ENCODE measurements at regions of chr14 and their contacts with region 1.

Region 1: GRCh38 chr14:103281496-103282231 is 52.4 kb upstream of the EIF5 start:
- ATAC-seq: peak; percentile 57 to 99 (median 62)
- H3K4me3 ChIP-seq: no peak overlapping the region
- H3K27ac ChIP-seq: no peak overlapping the region
- H3K4me1 ChIP-seq: peaks cover 0 to 3% of the 10 kb centered on the region in 2 donors

Region 2: DNA sequence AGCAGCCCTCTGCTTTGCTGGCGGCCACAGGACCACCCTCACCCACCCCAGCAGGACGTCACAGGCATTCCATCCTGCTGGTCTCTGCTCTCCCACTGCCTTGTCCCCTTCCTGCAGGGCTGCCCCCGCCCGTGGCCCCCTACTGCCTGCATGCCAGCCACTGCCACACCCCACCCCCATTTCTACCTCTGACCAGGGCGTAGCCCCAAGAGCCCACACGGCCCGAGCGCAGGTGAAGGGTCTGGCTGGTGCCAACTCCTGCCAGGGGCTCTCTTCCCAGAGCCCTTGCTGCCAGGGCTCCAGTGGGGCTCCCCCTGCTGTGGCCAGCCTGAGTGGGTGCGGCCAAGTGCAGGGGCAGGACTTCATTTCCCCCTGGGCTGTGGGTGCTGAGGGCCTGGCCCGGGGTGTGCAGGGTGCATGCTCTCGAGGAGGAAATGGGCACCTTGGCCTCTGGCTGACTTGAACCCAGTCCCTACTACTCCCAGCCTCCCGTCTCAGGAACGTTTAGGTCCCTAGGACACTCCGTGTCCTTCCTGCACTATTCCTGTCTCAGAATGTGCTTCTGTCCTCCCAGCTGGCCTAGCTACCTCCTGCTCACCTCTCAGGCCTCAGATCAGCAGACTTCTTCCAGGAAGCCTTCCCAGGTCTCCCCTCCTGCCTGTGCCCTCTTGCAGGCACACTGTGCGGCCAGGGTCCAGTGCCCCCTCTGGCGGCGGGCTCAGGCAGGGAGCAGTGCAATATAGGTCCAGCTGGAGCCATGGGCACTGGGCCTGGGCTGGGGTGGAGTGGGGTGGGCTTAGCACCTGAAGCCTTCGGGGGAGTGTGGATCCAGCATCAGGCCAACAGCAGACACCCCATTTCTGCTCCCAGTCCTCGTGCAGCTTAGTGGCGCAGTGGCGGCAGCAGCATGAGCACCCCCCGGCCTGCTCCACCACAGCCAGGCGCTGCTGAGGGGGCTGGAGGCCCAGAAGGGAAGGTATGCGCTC is 196.3 kb before region 1 on chr14:
- in situ Hi-C with region 1: loop called in 8 of 9 experiments (anchors 10 to 25 kb)
- ATAC-seq: peak in 2 of 8 experiments; percentile 46 to 66
- H3K4me3 ChIP-seq: no peak overlapping the region
- H3K27ac ChIP-seq: no peak overlapping the region
- H3K4me1 ChIP-seq: peaks cover 8% of the 10 kb centered on the region in 2 donors

Region 3: GRCh38 chr14:103361868-103362267 is 80.2 kb after region 1 on chr14:
- in situ Hi-C with region 1: no loop called
- ATAC-seq: peak in 5 of 8 experiments; percentile 73 to 100 (median 81)
- H3K4me3 ChIP-seq: no peak overlapping the region
- H3K27ac ChIP-seq: no peak overlapping the region
- H3K4me1 ChIP-seq: no peaks in the 10 kb centered on the region